Gastrocnemius medialis (tissue), 4 donors: ENCODE measurements at regions of chr6 and their contacts with region 1.

Region 1: GRCh38 chr6:54188846-54189245 is 77.6 kb downstream of the MLIP start:
- DNase-seq: no peak
- ATAC-seq: no peak
- H3K4me3 ChIP-seq: no peak overlapping the region
- H3K27ac ChIP-seq: no peak overlapping the region
- H3K4me1 ChIP-seq: peaks cover 0 to 5% of the 10 kb centered on the region in 2 donors
- H3K27me3 ChIP-seq: no peaks in the 10 kb centered on the region
- CTCF ChIP-seq: no peak
- POLR2A ChIP-seq: no peak

Region 2: GRCh38 chr6:54135665-54136369 is 53.0 kb before region 1 on chr6:
- in situ Hi-C with region 1: loop called in 1 of 4 experiments (anchors 10 kb)
- intact Hi-C with region 1: no loop called
- DNase-seq: no peak
- ATAC-seq: no peak
- H3K4me3 ChIP-seq: no peak overlapping the region
- H3K27ac ChIP-seq: peak overlapping the region; percentile 45 to 69 (median 68)
- H3K4me1 ChIP-seq: peaks cover 38 to 47% of the 10 kb centered on the region in 2 donors
- H3K27me3 ChIP-seq: no peaks in the 10 kb centered on the region
- CTCF ChIP-seq: no peak
- POLR2A ChIP-seq: no peak